Dendritic cell treated with granulocyte-macrophage colony-stimulating factor and Interleukin-4, amounts not matched to agents 40 ng/mL and 50 ng/mL, for 4 days (primary cell): ENCODE measurements at regions of chr19 and their contacts with region 1.

Region 1: DNA sequence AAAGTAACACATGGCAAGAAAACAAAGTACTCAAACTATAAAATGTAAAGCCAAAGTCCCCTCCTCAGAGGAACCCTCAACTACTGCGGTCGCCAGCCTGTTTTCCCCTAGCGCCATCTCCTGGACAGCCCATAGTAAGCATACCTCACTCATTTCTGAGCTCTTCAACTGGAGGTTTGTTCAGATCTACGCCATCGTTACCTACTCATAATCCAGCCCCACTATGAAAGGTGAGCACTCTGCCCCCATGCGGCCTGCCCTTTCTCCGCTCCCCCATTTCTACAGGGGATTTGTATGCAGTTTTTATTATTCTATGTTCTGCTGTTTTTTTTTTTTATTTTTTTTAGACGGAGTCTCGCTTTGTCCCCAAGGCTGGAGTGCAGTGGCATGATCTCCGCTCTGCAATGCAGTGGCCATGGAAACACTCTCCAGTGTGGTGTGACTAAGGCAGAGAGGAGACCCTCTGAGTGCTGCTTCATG is 26.2 kb downstream of the OPA3 start:
- H3K4me3 Mint-ChIP-seq: no peak overlapping the region
- H3K27ac Mint-ChIP-seq: no peak overlapping the region
- H3K4me1 Mint-ChIP-seq: peaks cover 8% of the 10 kb centered on the region
- H3K27me3 Mint-ChIP-seq: no peaks in the 10 kb centered on the region

Region 2: GRCh38 chr19:45496349-45496953 is 62.0 kb before region 1 on chr19:
- intact Hi-C with region 1: loop called (anchors 1 kb)
- H3K4me3 Mint-ChIP-seq: peak overlapping the region; percentile 78
- H3K27ac Mint-ChIP-seq: peak overlapping the region; percentile 71
- H3K4me1 Mint-ChIP-seq: peaks cover 77% of the 10 kb centered on the region
- H3K27me3 Mint-ChIP-seq: peaks cover 53% of the 10 kb centered on the region

Region 3: DNA sequence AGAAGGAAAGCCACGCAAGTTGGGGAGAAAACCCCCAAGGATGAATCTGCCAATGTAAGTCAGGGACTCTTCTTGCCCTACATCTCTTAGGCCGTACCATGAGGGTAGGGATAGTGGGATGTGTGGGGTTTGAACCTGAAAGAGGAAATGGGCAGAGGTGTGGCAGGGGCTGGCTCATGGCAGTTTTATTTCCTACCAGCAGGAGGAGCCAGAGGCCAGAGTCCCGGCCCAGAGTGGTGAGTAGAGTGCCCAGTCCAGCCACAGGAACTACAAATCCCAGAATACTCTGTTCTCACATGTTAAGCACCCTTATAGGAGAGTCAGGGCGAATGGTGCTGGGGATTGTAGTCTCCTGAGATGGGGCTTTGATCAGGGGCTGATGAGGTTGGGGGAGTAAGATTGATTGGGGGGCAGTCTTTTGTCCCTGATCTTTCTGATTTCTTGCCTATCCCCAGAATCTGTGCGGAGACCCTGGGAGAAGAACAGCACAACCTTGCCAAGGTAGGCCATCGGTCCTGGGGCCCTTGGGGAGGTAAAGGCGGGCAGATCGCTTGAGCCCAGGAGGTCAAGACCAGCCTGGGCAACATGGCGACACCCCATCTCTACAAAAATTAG is 34.7 kb before region 1 on chr19:
- intact Hi-C with region 1: loop called (anchors 5 kb)
- H3K4me3 Mint-ChIP-seq: no peak overlapping the region
- H3K27ac Mint-ChIP-seq: peak overlapping the region; percentile 47
- H3K4me1 Mint-ChIP-seq: peaks cover 76% of the 10 kb centered on the region
- H3K27me3 Mint-ChIP-seq: peaks cover 8% of the 10 kb centered on the region

Region 4: GRCh38 chr19:45862564-45863334 is 304.3 kb after region 1 on chr19 and contains the start of gene SYMPK:
- intact Hi-C with region 1: no loop called
- H3K4me3 Mint-ChIP-seq: peak within 1 kb of the TSS; percentile 91
- H3K27ac Mint-ChIP-seq: peak within 1 kb of the TSS; percentile 90
- H3K4me1 Mint-ChIP-seq: peaks cover 40% of the 10 kb centered on the region
- H3K27me3 Mint-ChIP-seq: peaks cover 44% of the 10 kb centered on the region